PC-9 (cell line): ENCODE measurements at regions of chr5 and their contacts with region 1.

Region 1: DNA sequence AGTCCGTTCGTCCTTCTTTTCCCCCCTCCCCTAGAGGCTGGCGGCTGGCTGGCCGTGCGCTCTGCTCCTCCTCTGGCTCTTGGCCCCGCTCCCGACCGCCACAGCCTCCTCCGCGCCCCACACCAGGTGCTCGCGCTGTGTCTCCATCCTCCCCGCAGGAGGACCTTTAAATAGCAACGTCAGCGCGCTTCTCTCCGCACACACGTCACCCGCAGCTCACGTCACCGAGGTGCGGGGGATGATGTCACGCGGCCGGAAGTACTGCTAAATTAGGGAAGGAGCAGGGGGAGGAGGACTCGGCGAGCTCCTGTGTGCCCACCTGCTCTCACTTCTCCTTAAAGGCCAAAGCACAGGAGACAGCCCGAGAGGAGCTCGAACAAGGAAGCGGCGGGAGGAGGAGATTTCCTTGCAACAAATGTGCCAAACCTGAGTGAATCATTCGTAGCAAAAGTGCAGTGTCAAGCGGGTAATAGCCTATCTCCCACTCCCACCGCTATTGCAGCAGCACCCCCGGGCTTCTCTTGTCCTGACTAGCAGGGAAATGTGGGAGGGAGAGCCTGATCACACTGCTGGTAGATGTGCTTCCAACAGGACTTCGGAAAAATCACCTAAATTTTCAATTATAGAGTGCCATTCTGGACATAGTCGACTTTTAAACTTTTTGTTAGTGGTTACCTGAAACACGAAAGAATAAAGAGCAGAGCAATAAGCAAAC is 614 bp upstream of the HOMER1 start:
- DNase-seq: peak; percentile 88 to 90
- H3K4me3 ChIP-seq: peak overlapping the region; percentile 90
- H3K27ac ChIP-seq: peak overlapping the region; percentile 76
- H3K4me1 ChIP-seq: peaks cover 55% of the 10 kb centered on the region
- H3K27me3 ChIP-seq: no peaks in the 10 kb centered on the region
- CTCF ChIP-seq: no peak

Region 2: DNA sequence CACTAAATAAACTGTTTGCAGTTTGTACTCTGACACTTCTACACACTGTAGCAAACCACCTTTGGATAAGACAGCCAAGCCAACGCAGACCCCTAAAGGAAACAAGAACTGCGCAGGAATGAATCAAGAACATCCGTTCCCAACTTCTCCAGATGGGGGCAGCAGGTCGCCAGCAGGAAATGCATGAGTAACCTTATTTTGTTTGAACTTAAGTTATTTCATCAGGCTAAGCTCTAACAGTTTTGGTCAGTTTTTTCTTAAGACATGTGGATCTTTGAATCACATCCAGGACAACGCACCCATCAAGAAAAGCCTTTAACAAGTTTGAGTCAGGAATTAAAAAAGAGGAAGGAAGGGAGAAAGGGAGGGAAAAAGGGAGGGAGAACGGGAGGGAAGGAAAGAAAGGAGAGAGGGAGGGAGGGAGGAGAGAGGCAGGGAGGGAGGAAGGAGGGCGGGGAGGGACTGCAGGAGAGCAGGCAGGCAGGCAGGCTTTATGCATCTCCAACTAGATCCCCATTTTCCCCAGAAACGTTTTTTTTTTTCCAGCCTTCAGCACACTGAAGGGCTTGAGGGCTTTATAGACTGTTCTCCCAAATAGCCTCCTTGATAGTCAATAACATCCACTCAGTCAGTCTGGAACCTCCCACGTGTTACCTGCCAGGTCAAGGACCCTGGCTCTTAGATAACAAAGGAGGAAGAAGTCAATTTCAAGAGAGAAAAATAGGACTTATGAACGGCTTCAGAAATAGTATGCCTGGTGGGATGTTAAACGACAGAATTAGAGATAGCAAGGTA is 380.7 kb before region 1 on chr5:
- CTCF ChIA-PET with region 1: interaction called, 6 read pairs
- POLR2A ChIA-PET with region 1: interaction called, 3 read pairs
- intact Hi-C with region 1: loop called (anchors 5 kb)
- DNase-seq: peak; percentile 61 to 66
- H3K4me3 ChIP-seq: peak overlapping the region; percentile 30; the same call in 1 of the 2 replicates
- H3K27ac ChIP-seq: peak overlapping the region; percentile 82
- H3K4me1 ChIP-seq: peaks cover 15% of the 10 kb centered on the region
- H3K27me3 ChIP-seq: no peaks in the 10 kb centered on the region
- CTCF ChIP-seq: peak; percentile 78

Region 3: DNA sequence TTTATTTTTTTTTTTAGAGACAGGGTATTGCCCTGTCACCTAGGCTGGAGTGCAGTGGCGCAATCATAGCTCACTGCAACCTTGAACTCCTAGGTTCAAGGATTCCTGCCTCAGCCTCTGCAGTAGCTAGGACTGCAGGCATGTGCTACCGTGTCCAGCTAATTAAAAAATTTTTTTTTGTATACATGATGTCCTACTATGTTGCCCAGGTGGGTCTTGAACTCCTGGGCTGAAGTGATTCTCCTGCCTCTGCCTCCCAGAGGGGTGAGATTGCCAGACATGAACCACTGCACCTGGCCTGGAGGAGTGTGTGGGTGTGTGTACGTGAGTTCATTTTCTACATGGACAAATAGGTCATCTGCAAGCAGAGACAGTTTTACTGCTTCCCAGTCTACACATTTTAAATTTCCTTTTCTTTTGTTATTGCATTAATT is 244.8 kb before region 1 on chr5:
- CTCF ChIA-PET with region 1: no interaction called
- POLR2A ChIA-PET with region 1: interaction called, 14 read pairs
- intact Hi-C with region 1: no loop called
- DNase-seq: no peak
- H3K4me3 ChIP-seq: no peak overlapping the region
- H3K27ac ChIP-seq: no peak overlapping the region
- H3K4me1 ChIP-seq: no peaks in the 10 kb centered on the region
- H3K27me3 ChIP-seq: no peaks in the 10 kb centered on the region
- CTCF ChIP-seq: no peak

Region 4: GRCh38 chr5:79490323-79490936 is 24.1 kb before region 1 on chr5:
- CTCF ChIA-PET with region 1: interaction called, 12 read pairs
- POLR2A ChIA-PET with region 1: no interaction called
- intact Hi-C with region 1: no loop called
- DNase-seq: no peak
- H3K4me3 ChIP-seq: no peak overlapping the region
- H3K27ac ChIP-seq: no peak overlapping the region
- H3K4me1 ChIP-seq: peaks cover 9% of the 10 kb centered on the region
- H3K27me3 ChIP-seq: no peaks in the 10 kb centered on the region
- CTCF ChIP-seq: no peak

Region 5: DNA sequence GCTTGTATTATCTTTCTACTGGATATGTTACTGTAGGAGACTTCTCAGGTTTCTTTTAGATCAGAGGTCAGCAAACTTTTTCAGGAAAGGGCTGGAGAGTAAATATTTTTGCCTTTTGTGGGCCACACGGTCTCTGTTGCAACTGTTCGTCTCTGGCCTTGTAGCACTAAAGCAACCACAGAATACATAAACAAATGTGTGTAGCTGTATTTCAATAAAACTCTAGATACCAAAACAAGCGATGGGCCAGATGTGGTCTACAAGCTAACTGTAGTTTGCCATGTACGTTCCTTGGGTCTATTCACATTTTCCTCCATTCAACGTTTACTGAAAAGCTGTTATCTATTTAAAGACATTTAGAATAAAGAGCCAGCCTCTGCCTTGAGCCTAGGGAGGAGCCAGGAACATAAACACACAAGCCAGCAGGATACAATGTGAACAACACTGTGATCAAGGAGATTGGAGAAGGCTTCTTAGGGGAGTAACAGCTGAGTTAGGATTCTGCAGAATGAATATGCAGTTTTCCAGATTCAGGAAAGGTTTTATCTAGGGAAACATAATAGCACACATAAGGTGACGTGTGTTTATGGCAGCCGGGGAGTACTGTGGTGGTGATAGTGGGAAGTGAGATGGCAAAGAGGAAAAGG is 32.4 kb after region 1 on chr5:
- CTCF ChIA-PET with region 1: no interaction called
- POLR2A ChIA-PET with region 1: no interaction called
- intact Hi-C with region 1: loop called (anchors 2 kb)
- DNase-seq: no peak
- H3K4me3 ChIP-seq: peak overlapping the region; percentile 44; the same call in 1 of the 2 replicates
- H3K27ac ChIP-seq: peak overlapping the region; percentile 76
- H3K4me1 ChIP-seq: peaks cover 48% of the 10 kb centered on the region
- H3K27me3 ChIP-seq: no peaks in the 10 kb centered on the region
- CTCF ChIP-seq: no peak

Region 6: DNA sequence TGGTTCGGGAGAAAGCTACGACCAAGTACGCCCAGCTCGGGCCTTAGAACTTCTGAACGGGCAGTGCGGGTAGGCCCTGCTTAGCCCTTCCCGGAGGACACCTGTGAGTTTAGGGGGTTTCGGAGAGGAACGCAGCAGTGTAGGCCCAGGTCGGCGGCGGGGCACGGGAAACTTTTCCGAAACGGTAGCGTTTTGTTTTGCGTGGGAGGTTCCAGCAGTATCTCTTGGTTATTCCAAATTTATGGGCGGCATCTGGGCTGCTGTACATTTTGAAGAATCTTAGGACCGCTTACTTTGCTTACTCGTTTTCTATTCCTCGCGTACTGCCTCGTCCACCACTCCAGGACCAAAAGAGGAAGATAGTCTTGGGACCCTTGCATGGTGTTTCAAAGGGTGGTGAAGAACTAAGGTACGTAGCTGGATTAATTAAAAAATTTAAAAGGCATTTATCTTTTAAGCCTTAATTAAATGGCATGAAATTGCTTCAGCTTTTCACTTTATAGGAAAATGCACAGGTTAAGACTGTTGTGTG is 98.2 kb after region 1 on chr5:
- CTCF ChIA-PET with region 1: interaction called, 3 read pairs
- POLR2A ChIA-PET with region 1: interaction called, 5 read pairs
- intact Hi-C with region 1: loop called (anchors 2 kb)
- DNase-seq: no peak
- H3K4me3 ChIP-seq: peak overlapping the region; percentile 83
- H3K27ac ChIP-seq: peak overlapping the region; percentile 83
- H3K4me1 ChIP-seq: peaks cover 14% of the 10 kb centered on the region
- H3K27me3 ChIP-seq: no peaks in the 10 kb centered on the region
- CTCF ChIP-seq: no peak